K562 (cell line): ENCODE measurements at regions of chr1 and their contacts with region 1.

Region 1: GRCh38 chr1:116514708-116515525 is 55.9 kb downstream of the CD58 start:
- DNase-seq: no peak
- ATAC-seq: peak; percentile 60
- H3K4me3 ChIP-seq: no peak overlapping the region
- H3K27ac ChIP-seq: peak overlapping the region; percentile 37; the same call in 1 of the 3 replicates
- H3K4me1 ChIP-seq: peaks cover 4 to 8% of the 10 kb centered on the region in 2 experiments; a peak in 4 of 5 replicates
- H3K27me3 ChIP-seq: no peaks in the 10 kb centered on the region
- CTCF ChIP-seq: no peak
- EP300 ChIP-seq: no peak
- POLR2A ChIP-seq: no peak
- RAD21 ChIP-seq: no peak

Region 2: DNA sequence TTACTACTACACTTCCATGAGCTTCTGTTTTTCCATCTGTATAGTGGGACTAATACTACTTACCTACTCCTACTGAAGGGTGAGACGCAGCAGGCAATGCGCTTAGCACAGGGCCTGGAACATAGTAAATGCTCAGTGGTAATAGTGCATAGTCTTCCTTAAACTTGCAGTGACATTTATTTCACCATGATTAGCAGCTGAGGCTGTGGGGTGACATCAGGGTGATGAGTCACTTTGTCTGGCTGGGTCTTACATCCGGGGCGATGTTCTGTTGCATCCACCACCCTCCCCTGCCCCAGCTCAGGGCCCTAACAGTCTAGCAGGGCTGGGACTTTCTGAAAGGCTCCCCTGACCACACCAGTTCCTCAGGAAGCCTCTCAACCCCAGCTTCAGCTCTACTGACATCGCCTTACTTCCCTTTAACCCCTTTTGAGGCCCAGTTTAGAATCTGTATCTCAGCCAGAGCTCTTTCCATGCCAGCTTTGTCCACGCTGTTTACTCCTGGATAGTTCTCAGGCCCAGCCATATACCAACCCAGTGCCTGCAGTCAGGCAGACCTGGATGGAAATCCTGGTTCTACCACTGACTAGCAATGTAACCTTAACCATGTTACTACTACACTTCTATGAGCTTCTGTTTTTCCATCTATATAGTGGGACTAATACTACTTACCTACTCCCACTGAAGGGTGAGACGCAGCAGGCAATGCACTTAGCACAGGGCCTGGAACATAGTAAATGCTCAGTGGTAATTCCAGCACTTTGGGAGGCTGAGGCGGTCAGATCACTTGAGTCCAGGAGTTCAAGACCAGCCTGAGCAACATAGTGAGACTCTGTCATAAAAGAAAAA is 10.4 kb before region 1 on chr1:
- CTCF ChIA-PET with region 1: no interaction called
- POLR2A ChIA-PET with region 1: interaction called, 14 read pairs
- in situ Hi-C with region 1: no loop called
- intact Hi-C with region 1: no loop called
- DNase-seq: peak; percentile 90 to 97 (median 93)
- ATAC-seq: peak; percentile 91
- H3K4me3 ChIP-seq: no peak overlapping the region
- H3K27ac ChIP-seq: peak overlapping the region; percentile 99
- H3K4me1 ChIP-seq: peaks cover 45 to 82% of the 10 kb centered on the region in 2 experiments
- H3K27me3 ChIP-seq: no peaks in the 10 kb centered on the region
- CTCF ChIP-seq: no peak
- EP300 ChIP-seq: peak; percentile 80
- POLR2A ChIP-seq: peak; percentile 60
- RAD21 ChIP-seq: peak in 1 of 2 experiments; percentile 36; a peak in 1 of 4 replicates

Region 3: GRCh38 chr1:116724765-116725375 is 210.0 kb after region 1 on chr1:
- CTCF ChIA-PET with region 1: no interaction called
- POLR2A ChIA-PET with region 1: no interaction called
- in situ Hi-C with region 1: no loop called
- intact Hi-C with region 1: no loop called
- DNase-seq: peak; percentile 64 to 88 (median 71)
- ATAC-seq: peak; percentile 78
- H3K4me3 ChIP-seq: no peak overlapping the region
- H3K27ac ChIP-seq: no peak overlapping the region
- H3K4me1 ChIP-seq: peaks cover 0 to 6% of the 10 kb centered on the region in 2 experiments; a peak in 2 of 5 replicates
- H3K27me3 ChIP-seq: no peaks in the 10 kb centered on the region
- CTCF ChIP-seq: peak; percentile 65 to 88 (median 84); a peak in 5 of 6 replicates
- EP300 ChIP-seq: no peak
- POLR2A ChIP-seq: no peak
- RAD21 ChIP-seq: peak; percentile 64 to 76